Adrenal gland (tissue), 19 donors: ENCODE measurements at regions of chr1 and their contacts with region 1.

Region 1: GRCh38 chr1:202571347-202572339 is 138.6 kb downstream of the SYT2 start:
- DNase-seq: peak in 5 of 7 donors; percentile 22 to 42 (median 32)
- H3K4me3 ChIP-seq: no peak overlapping the region
- H3K27ac ChIP-seq: no peak overlapping the region
- H3K4me1 ChIP-seq: peaks cover 10 to 39% of the 10 kb centered on the region in 2 donors
- H3K27me3 ChIP-seq: no peaks in the 10 kb centered on the region
- CTCF ChIP-seq: peak; percentile 62 to 80 (median 68)
- POLR2A ChIP-seq: no peak

Region 2: GRCh38 chr1:202501281-202501680 is 70.4 kb before region 1 on chr1:
- intact Hi-C with region 1: loop called in 1 of 2 experiments (anchors 10 kb)
- DNase-seq: no peak
- H3K4me3 ChIP-seq: no peak overlapping the region
- H3K27ac ChIP-seq: no peak overlapping the region
- H3K4me1 ChIP-seq: peaks cover 0 to 4% of the 10 kb centered on the region in 2 donors
- H3K27me3 ChIP-seq: no peaks in the 10 kb centered on the region
- CTCF ChIP-seq: peak; percentile 39 to 73 (median 63)
- POLR2A ChIP-seq: no peak